ENCODE measurements at regions of chr2 and their contacts with region 1.

Region 1: DNA sequence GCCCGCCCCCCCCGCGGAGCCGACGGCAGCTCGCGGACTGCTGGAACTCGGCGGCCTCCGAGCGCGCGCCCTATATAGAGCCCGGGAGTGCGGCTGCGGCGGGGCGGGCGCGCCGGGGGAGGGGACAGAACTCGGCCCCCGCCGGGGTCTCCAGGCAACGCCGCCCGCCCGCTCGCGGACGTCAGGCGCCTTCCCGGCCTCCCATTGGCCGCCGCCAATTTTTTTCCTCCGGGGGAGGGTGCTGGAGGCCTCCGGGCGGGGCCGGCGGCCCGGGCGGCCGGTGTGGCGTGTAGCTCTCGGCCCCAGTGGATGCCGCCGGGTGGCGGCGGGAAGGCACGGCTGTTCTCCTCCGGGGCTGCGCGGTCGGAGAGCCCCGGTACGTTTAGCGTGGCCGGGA is at the start of gene ZFP36L2:
- DNase-seq: peak; percentile 95 to 97 (median 97)
- H3K4me3 ChIP-seq: peak within 1 kb of the TSS; percentile 88 to 96 (median 90)
- H3K27ac ChIP-seq: peak within 1 kb of the TSS; percentile 98 to 100 (median 99)
- H3K4me1 ChIP-seq: peaks cover 25 to 36% of the 10 kb centered on the region in 2 donors
- H3K27me3 ChIP-seq: no peaks in the 10 kb centered on the region
- CTCF ChIP-seq: no peak
- POLR2A ChIP-seq: peak; percentile 95 to 99
- total RNA-seq, gene ZFP36L2: 8.4 to 333 (median 109) TPM

Region 2: GRCh38 chr2:42835577-42836371 is 390.8 kb before region 1 on chr2:
- intact Hi-C with region 1: loop called in 1 of 2 experiments (anchors 10 kb)
- DNase-seq: peak in 4 of 7 donors; percentile 22 to 54 (median 34)
- H3K4me3 ChIP-seq: no peak overlapping the region
- H3K27ac ChIP-seq: no peak overlapping the region
- H3K4me1 ChIP-seq: no peaks in the 10 kb centered on the region
- H3K27me3 ChIP-seq: no peaks in the 10 kb centered on the region
- CTCF ChIP-seq: no peak
- POLR2A ChIP-seq: no peak

Region 3: GRCh38 chr2:42974721-42975717 is 251.5 kb before region 1 on chr2:
- intact Hi-C with region 1: loop called (anchors 2 to 5 kb)
- DNase-seq: peak; percentile 73 to 85 (median 79)
- H3K4me3 ChIP-seq: peak overlapping the region in 2 of 4 donors; percentile 34 to 41
- H3K27ac ChIP-seq: peak overlapping the region in 3 of 5 donors; percentile 20 to 71 (median 62)
- H3K4me1 ChIP-seq: peaks cover 3 to 11% of the 10 kb centered on the region in 2 donors
- H3K27me3 ChIP-seq: no peaks in the 10 kb centered on the region
- CTCF ChIP-seq: peak; percentile 82 to 96 (median 94)
- POLR2A ChIP-seq: no peak

Region 4: GRCh38 chr2:43024515-43025011 is 202.0 kb before region 1 on chr2:
- intact Hi-C with region 1: loop called in 1 of 2 experiments (anchors 5 kb)
- DNase-seq: peak; percentile 52 to 78 (median 71)
- H3K4me3 ChIP-seq: no peak overlapping the region
- H3K27ac ChIP-seq: peak overlapping the region in 1 of 5 donors; percentile 48
- H3K4me1 ChIP-seq: no peaks in the 10 kb centered on the region
- H3K27me3 ChIP-seq: no peaks in the 10 kb centered on the region
- CTCF ChIP-seq: peak; percentile 63 to 90 (median 80)
- POLR2A ChIP-seq: no peak

Region 5: GRCh38 chr2:43131024-43131889 is 95.3 kb before region 1 on chr2:
- intact Hi-C with region 1: loop called (anchors 5 to 10 kb)
- DNase-seq: peak; percentile 77 to 94 (median 93)
- H3K4me3 ChIP-seq: no peak overlapping the region
- H3K27ac ChIP-seq: peak overlapping the region; percentile 26 to 88 (median 71)
- H3K4me1 ChIP-seq: peaks cover 10 to 54% of the 10 kb centered on the region in 2 donors
- H3K27me3 ChIP-seq: no peaks in the 10 kb centered on the region
- CTCF ChIP-seq: peak in 5 of 6 experiments; percentile 42 to 69 (median 46)
- POLR2A ChIP-seq: peak in 1 of 2 donors; percentile 12

Region 6: DNA sequence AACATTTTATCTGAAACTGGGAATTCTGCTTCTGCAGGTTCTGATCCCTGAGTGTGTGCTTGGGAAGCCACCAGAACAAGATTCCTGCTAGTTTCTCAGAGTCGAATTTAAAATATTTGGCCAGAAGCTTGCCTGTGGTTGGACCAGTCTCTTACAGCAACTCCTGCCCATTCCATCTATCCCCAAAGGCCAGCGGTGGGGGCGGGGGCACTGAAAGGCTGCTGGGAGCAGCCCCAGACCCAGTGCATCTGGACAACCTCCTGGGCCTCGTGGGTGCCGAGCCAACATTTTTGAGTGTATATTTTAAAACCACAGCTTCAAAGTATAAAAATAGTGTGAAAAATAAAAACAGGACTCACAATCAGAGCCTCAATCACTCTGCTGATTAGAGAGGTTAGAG is 38.4 kb after region 1 on chr2:
- intact Hi-C with region 1: no loop called
- DNase-seq: no peak
- H3K4me3 ChIP-seq: no peak overlapping the region
- H3K27ac ChIP-seq: peak overlapping the region in 2 of 5 donors; percentile 13 to 44
- H3K4me1 ChIP-seq: peaks cover 20 to 46% of the 10 kb centered on the region in 2 donors
- H3K27me3 ChIP-seq: no peaks in the 10 kb centered on the region
- CTCF ChIP-seq: no peak
- POLR2A ChIP-seq: no peak

Region 7: GRCh38 chr2:43484323-43484930 is 257.9 kb after region 1 on chr2:
- intact Hi-C with region 1: loop called (anchors 5 to 10 kb)
- DNase-seq: no peak
- H3K4me3 ChIP-seq: no peak overlapping the region
- H3K27ac ChIP-seq: peak overlapping the region in 1 of 5 donors; percentile 19
- H3K4me1 ChIP-seq: peaks cover 0 to 58% of the 10 kb centered on the region in 2 donors
- H3K27me3 ChIP-seq: no peaks in the 10 kb centered on the region
- CTCF ChIP-seq: peak; percentile 37 to 91 (median 74)
- POLR2A ChIP-seq: no peak

Region 8: GRCh38 chr2:43569921-43570320 is 343.4 kb after region 1 on chr2:
- intact Hi-C with region 1: no loop called
- DNase-seq: no peak
- H3K4me3 ChIP-seq: no peak overlapping the region
- H3K27ac ChIP-seq: no peak overlapping the region
- H3K4me1 ChIP-seq: no peaks in the 10 kb centered on the region
- H3K27me3 ChIP-seq: no peaks in the 10 kb centered on the region
- CTCF ChIP-seq: no peak
- POLR2A ChIP-seq: no peak

Region 9: GRCh38 chr2:45009303-45009927 is 1782.9 kb after region 1 on chr2 and contains the start of gene SIX2:
- intact Hi-C with region 1: no loop called
- DNase-seq: peak; percentile 85 to 97 (median 94)
- H3K4me3 ChIP-seq: peak within 1 kb of the TSS in 2 of 4 donors; percentile 31 to 58
- H3K27ac ChIP-seq: peak within 1 kb of the TSS in 3 of 5 donors; percentile 16 to 50 (median 32)
- H3K4me1 ChIP-seq: peaks cover 21 to 39% of the 10 kb centered on the region in 2 donors
- H3K27me3 ChIP-seq: peaks cover 85% of the 10 kb centered on the region
- CTCF ChIP-seq: no peak
- POLR2A ChIP-seq: peak in 1 of 2 donors; percentile 74
- total RNA-seq, gene SIX2: 0.06 to 0.36 (median 0.13) TPM in 6 of 9 donors, not detected in the others